ENCODE measurements at regions of chr7 and their contacts with region 1.

Region 1: DNA sequence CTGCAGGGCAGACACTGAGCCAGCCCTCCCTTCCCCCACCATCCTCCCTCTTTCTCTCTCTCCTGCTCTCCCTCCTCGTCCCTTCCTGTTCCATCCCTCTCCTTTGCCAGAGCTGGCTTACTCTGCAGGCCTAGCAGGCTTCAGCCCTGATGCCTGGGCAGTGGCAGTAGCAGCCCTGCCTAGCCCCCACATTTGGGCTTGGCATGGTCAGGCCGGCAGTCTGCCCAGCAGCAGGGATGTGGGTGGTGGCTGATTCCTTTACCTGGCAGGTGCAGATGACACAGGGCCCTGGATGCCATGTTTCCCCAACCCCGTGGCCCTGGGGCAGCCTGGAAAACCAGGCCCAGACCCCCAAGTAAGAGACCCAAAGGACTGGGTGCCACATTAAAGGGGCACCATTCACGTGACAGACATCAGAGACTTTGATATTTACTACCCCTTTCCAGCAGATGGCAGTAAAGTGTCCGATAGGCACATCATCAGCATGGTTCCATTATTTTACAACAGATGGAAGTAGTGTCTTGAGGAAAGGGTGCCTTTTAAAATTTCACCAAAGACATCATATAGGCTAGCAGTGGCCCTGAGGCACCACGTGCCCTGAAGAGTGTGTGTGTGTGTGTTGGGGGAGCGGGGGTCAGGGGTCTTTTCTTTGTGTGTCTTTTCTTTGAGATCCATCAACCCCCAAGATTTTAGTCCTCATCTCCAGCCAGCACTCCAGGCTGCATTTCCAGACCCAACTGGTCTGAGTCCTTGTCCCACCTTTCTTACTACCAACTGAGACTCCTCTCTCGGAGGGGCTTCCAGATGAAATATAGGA is 5.9 kb downstream of the KCP start:
- DNase-seq: peak; percentile 52
- ATAC-seq: peak; percentile 78
- H3K4me3 ChIP-seq: no peak overlapping the region
- H3K27ac ChIP-seq: no peak overlapping the region
- H3K4me1 ChIP-seq: peaks cover 7 to 27% of the 10 kb centered on the region in 2 experiments
- H3K27me3 ChIP-seq: no peaks in the 10 kb centered on the region
- CTCF ChIP-seq: peak; percentile 63 to 82 (median 76)
- POLR2A ChIP-seq: no peak
- RAD21 ChIP-seq: peak; percentile 79

Region 2: DNA sequence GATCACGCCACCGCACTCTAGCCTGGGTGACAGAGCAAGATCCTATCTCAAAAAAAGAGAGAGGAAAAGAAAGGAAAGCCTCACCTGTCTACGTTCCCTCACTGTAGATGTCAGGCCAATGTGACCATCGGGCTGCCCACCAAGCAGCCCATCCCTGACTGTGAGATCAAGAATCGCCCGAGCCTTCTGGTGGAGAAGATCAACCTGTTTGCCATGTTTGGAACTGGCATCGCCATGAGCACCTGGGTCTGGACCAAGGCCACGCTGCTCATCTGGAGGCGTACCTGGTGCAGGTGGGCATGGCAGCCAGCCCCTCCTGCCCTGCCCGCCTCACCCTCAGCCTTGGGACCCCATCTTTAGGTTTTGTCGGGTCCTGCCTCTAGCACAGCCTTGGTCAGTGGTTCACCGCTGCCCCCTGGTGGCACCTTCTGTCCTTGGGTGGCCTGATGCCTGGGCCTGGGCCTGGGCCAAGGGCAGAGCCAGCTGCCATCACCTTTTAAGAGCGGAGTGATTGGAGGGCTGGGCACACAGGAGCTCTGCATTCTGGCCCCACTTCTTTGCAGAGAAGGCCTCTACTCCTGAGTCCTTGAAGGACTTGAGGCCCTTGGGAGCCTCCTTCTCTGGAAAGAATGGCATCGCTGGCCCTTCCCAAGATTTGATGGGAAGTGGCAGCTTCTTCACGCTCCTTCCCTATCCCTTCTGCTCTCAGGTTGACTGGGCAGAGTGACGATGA is 305.8 kb after region 1 on chr7:
- CTCF ChIA-PET with region 1: interaction called, 3 read pairs
- POLR2A ChIA-PET with region 1: no interaction called
- RAD21 ChIA-PET with region 1: no interaction called
- intact Hi-C with region 1: loop called (anchors 2 kb)
- DNase-seq: no peak
- ATAC-seq: peak; percentile 91
- H3K4me3 ChIP-seq: no peak overlapping the region
- H3K27ac ChIP-seq: no peak overlapping the region
- H3K4me1 ChIP-seq: no peaks in the 10 kb centered on the region
- H3K27me3 ChIP-seq: no peaks in the 10 kb centered on the region
- CTCF ChIP-seq: peak; percentile 76 to 93 (median 87)
- POLR2A ChIP-seq: no peak
- RAD21 ChIP-seq: peak; percentile 90